Common myeloid progenitor, CD34-positive (primary cell): ENCODE measurements at regions of chr3 and their contacts with region 1.

Region 1: GRCh38 chr3:183385698-183386613 is 42.5 kb downstream of the MCF2L2 start:
- DNase-seq: peak; percentile 71 to 88 (median 82)
- H3K4me3 ChIP-seq: no peak overlapping the region
- H3K27ac ChIP-seq: no peak overlapping the region
- H3K4me1 ChIP-seq: peaks cover 3 to 10% (median 7%) of the 10 kb centered on the region in 4 experiments
- H3K27me3 ChIP-seq: no peaks in the 10 kb centered on the region

Region 2: DNA sequence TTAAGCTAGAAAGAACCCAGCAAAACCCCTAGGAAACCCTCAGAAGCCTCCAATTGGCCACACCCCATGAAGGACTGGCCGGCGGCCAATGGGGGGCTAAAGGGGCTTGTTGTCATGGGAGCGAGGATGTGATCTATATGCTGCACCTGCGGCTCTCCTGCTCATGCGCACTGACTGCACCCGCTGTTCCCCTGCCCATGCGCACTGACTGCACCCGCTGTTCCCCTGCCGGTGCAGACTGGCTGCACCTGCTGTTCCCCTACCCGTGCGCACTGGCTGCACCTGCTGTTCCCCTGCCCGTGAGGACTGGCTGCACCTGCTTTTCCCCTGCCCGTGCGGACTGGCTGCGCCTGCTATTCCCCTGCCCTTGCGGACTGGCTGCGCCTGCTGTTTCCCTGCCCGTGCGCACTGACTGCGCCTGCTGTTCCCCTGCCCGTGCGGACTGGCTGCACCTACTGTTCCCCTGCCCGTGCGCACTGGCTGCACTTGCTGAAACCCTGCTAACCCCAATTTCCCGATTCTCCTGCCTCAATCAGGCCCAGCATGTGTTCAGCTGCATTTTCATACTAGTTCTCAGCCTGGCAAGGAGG is 269.8 kb before region 1 on chr3:
- CTCF ChIA-PET with region 1: interaction called, 66 read pairs
- POLR2A ChIA-PET with region 1: no interaction called
- DNase-seq: peak; percentile 86 to 94 (median 92)
- H3K4me3 ChIP-seq: peak overlapping the region; percentile 18 to 79 (median 64)
- H3K27ac ChIP-seq: no peak overlapping the region
- H3K4me1 ChIP-seq: peaks cover 0 to 13% (median 11%) of the 10 kb centered on the region in 4 experiments
- H3K27me3 ChIP-seq: peaks cover 0 to 2% (median 0%) of the 10 kb centered on the region in 5 experiments

Region 3: DNA sequence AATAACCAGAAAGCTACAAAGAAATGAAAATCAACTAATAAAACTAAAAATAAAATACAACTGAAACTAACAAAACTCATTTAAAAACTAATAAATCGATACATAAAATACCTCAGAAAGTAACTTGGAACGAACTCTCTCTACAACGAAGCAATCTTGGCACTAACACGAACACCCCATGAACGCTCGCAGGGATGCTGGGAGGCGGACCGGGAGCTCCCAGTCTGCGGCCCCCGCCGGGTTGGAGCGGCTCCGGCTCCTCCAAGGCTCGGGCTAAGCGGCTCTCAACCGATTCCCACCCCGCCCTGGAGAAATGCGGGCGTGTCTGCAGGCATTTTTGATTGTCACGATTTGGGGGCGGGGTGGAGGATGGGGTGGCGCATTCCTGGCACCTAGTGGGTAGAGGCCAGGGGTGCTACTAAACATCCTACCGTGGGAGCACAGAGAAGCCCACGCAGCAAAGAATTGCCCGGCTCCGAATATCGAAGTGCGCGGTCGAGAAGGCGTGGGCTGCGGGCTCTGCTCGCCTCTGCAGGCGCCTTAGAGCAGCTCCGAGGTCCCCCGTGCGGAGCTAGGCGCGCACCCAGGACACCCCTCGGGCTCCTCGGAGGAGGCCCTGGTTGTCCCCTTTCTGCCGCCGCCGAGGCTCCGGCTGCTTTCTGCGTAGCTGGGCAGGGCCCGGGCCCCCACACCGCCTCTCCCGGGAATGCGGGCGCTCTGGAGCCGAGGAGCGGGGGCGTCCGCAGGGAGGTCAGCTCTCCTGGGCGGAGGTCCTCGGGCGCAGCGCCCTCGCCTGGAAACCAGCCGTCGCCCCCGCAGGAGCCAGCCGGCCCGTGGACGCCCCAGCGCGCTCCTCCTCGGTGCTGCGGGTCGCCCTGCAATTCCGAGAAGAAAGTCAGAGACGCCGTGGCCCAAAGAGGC is 207.1 kb before region 1 on chr3:
- CTCF ChIA-PET with region 1: interaction called, 349 read pairs
- POLR2A ChIA-PET with region 1: no interaction called
- DNase-seq: peak; percentile 54 to 80 (median 72)
- H3K4me3 ChIP-seq: peak overlapping the region; percentile 29 to 82 (median 58)
- H3K27ac ChIP-seq: no peak overlapping the region
- H3K4me1 ChIP-seq: peaks cover 0 to 19% (median 18%) of the 10 kb centered on the region in 4 experiments
- H3K27me3 ChIP-seq: peaks cover 0 to 30% (median 7%) of the 10 kb centered on the region in 5 experiments

Region 4: DNA sequence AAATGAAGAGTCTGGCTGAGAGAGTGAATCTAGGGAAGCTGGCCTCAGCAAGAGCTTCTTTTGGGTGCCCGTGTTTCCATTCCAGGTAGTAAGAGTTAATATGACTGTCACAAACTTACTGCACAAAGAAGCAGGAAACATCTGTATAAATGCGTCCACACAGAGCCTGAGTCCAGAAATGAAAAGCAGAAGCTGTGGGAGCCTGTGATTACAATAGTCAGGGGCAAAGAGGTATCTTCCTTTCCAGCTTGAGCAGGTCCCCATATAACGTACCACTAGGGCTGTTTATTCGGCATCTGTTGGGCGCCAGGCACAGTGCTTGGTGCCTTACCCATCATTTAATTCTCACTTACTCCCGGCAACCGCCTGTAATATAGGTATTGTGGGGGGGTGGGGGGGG is 173.4 kb before region 1 on chr3:
- CTCF ChIA-PET with region 1: interaction called, 16 read pairs
- POLR2A ChIA-PET with region 1: no interaction called
- DNase-seq: peak; percentile 94 to 99 (median 98)
- H3K4me3 ChIP-seq: peak overlapping the region in 3 of 7 experiments; percentile 12 to 30 (median 24)
- H3K27ac ChIP-seq: peak overlapping the region; percentile 56 to 84
- H3K4me1 ChIP-seq: peaks cover 21 to 54% (median 45%) of the 10 kb centered on the region in 4 experiments
- H3K27me3 ChIP-seq: no peaks in the 10 kb centered on the region

Region 5: DNA sequence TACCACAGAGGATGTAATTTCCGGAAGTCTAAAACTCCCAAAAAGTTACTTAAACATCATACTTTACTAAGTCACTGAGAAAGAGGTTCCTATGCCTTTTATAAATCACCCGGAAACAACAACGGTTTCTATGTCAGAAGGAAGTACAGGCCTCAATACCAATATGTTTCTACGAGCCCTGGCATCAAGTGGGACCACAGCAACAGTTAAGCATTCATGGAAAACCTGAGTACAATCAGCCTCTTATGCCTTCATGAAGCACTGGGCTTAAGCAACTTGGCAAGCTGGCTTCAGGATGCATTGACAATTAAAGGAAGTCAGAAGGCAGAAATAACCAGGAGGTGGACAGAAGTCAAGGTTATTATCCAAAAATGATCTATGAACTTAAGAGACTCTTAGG is 152.0 kb before region 1 on chr3:
- CTCF ChIA-PET with region 1: no interaction called
- POLR2A ChIA-PET with region 1: no interaction called
- DNase-seq: peak in 2 of 3 donors; percentile 44 to 62
- H3K4me3 ChIP-seq: no peak overlapping the region
- H3K27ac ChIP-seq: no peak overlapping the region
- H3K4me1 ChIP-seq: peaks cover 0 to 8% (median 6%) of the 10 kb centered on the region in 4 experiments
- H3K27me3 ChIP-seq: no peaks in the 10 kb centered on the region

Region 6: GRCh38 chr3:183369117-183369516 is 16.8 kb before region 1 on chr3:
- CTCF ChIA-PET with region 1: interaction called, 12 read pairs
- POLR2A ChIA-PET with region 1: no interaction called
- DNase-seq: peak; percentile 44 to 76 (median 71)
- H3K4me3 ChIP-seq: no peak overlapping the region
- H3K27ac ChIP-seq: no peak overlapping the region
- H3K4me1 ChIP-seq: peaks cover 0 to 22% (median 2%) of the 10 kb centered on the region in 4 experiments
- H3K27me3 ChIP-seq: no peaks in the 10 kb centered on the region